ENCODE measurements at regions of chr14 and their contacts with region 1.

Region 1: GRCh38 chr14:73753959-73754882 is 40.0 kb upstream of the PNMA1 start:
- DNase-seq: peak; percentile 48
- H3K4me3 Mint-ChIP-seq: peak overlapping the region; percentile 86
- H3K27ac Mint-ChIP-seq: peak overlapping the region; percentile 89
- H3K4me1 Mint-ChIP-seq: peaks cover 71% of the 10 kb centered on the region
- H3K27me3 Mint-ChIP-seq: no peaks in the 10 kb centered on the region
- CTCF ChIP-seq: no peak

Region 2: DNA sequence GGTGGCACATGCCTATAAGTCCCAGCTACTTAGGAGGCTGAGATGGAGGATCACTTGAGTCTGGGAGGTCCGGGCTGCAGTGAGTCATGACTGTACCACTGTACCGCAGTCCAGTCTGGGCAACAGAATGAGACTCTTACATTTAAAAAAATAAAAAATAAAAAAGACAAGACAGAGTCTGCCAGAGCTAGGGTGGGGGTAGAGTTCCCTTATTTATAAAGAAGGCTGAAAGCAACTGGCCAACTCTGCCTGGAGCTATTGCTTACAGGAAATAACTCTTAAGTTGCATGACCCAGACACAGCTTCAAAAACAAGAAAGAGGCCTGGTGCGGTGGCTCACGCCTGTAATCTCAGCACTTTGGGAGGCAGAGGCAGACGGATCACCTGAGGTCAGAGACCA is 327.3 kb before region 1 on chr14:
- CTCF ChIA-PET with region 1: no interaction called
- POLR2A ChIA-PET with region 1: no interaction called
- intact Hi-C with region 1: no loop called
- DNase-seq: no peak
- H3K4me3 Mint-ChIP-seq: no peak overlapping the region
- H3K27ac Mint-ChIP-seq: no peak overlapping the region
- H3K4me1 Mint-ChIP-seq: peaks cover 11% of the 10 kb centered on the region
- H3K27me3 Mint-ChIP-seq: no peaks in the 10 kb centered on the region
- CTCF ChIP-seq: no peak

Region 3: GRCh38 chr14:73802431-73803188 is 48.4 kb after region 1 on chr14:
- CTCF ChIA-PET with region 1: interaction called, 23 read pairs
- POLR2A ChIA-PET with region 1: interaction called, 101 read pairs
- intact Hi-C with region 1: no loop called
- DNase-seq: peak; percentile 80
- H3K4me3 Mint-ChIP-seq: peak overlapping the region; percentile 47
- H3K27ac Mint-ChIP-seq: peak overlapping the region; percentile 86
- H3K4me1 Mint-ChIP-seq: peaks cover 25% of the 10 kb centered on the region
- H3K27me3 Mint-ChIP-seq: no peaks in the 10 kb centered on the region
- CTCF ChIP-seq: no peak

Region 4: DNA sequence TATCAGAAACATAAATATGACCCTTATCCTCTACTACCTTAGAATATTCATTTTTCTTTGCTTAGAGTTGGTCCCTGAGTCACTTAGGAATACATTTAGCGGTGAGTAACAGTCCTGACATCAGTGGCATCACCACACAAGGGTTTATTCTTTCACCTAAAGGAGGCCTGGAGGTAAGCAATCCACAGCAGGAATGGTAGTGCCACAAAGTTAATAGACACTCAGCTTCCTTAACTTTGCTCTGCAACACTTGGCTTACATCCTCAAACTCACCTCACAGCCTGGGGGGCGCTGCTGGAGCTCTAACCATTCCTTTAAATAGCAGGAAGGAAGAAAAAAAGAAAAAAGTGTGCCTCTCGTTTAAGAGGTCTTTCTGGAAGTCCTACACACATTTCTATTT is 294.1 kb after region 1 on chr14:
- CTCF ChIA-PET with region 1: no interaction called
- POLR2A ChIA-PET with region 1: no interaction called
- intact Hi-C with region 1: no loop called
- DNase-seq: peak; percentile 27
- H3K4me3 Mint-ChIP-seq: no peak overlapping the region
- H3K27ac Mint-ChIP-seq: no peak overlapping the region
- H3K4me1 Mint-ChIP-seq: no peaks in the 10 kb centered on the region
- H3K27me3 Mint-ChIP-seq: no peaks in the 10 kb centered on the region
- CTCF ChIP-seq: no peak

Region 5: GRCh38 chr14:74612350-74613021 is 858.3 kb after region 1 on chr14:
- CTCF ChIA-PET with region 1: no interaction called
- POLR2A ChIA-PET with region 1: no interaction called
- intact Hi-C with region 1: no loop called
- DNase-seq: peak; percentile 72
- H3K4me3 Mint-ChIP-seq: peak overlapping the region; percentile 69
- H3K27ac Mint-ChIP-seq: no peak overlapping the region
- H3K4me1 Mint-ChIP-seq: peaks cover 45% of the 10 kb centered on the region
- H3K27me3 Mint-ChIP-seq: no peaks in the 10 kb centered on the region
- CTCF ChIP-seq: peak; percentile 58